Mammary epithelial cell (primary cell): ENCODE measurements at regions of chr4 and their contacts with region 1.

Region 1: DNA sequence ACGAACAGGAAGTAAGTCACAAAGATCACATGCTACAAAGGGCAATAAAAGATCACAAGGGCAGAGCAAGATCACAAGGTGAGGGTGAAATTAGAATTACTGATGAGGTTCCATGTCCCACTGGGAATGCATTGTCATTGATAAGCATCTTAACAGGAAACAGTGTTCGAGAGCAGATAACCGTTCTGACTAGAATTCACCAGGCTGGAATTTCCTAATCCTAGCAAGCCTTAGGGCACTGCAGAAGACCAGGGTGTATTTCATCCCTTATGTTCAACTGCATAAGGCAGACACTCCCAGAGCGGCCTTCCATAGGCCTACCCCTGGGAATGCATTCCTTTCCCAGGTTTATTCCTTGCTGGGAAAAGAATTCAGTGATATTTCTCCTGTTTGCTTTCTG is 980.6 kb upstream of the LCORL start:
- DNase-seq: no peak
- H3K4me3 ChIP-seq: no peak overlapping the region
- H3K27ac ChIP-seq: no peak overlapping the region
- H3K4me1 ChIP-seq: no peaks in the 10 kb centered on the region
- H3K27me3 ChIP-seq: no peaks in the 10 kb centered on the region
- CTCF ChIP-seq: no peak

Region 2: GRCh38 chr4:18945464-18945863 is 56.7 kb before region 1 on chr4:
- CTCF ChIA-PET with region 1: no interaction called
- dilution Hi-C with region 1: no loop called
- in situ Hi-C with region 1: no loop called
- intact Hi-C with region 1: loop called (anchors 2 kb)
- DNase-seq: no peak
- H3K4me3 ChIP-seq: no peak overlapping the region
- H3K27ac ChIP-seq: no peak overlapping the region
- H3K4me1 ChIP-seq: no peaks in the 10 kb centered on the region
- H3K27me3 ChIP-seq: no peaks in the 10 kb centered on the region
- CTCF ChIP-seq: no peak